ENCODE measurements at regions of chr2 and their contacts with region 1.

Region 1: GRCh38 chr2:200471324-200471848 is 38.5 kb downstream of the KCTD18 start:
- DNase-seq: peak; percentile 49
- H3K4me3 Mint-ChIP-seq: no peak overlapping the region
- H3K27ac Mint-ChIP-seq: no peak overlapping the region
- H3K4me1 Mint-ChIP-seq: peaks cover 36% of the 10 kb centered on the region
- H3K27me3 Mint-ChIP-seq: no peaks in the 10 kb centered on the region

Region 2: GRCh38 chr2:199979832-199980628 is 491.4 kb before region 1 on chr2:
- CTCF ChIA-PET with region 1: interaction called, 34 read pairs
- DNase-seq: peak; percentile 88
- H3K4me3 Mint-ChIP-seq: no peak overlapping the region
- H3K27ac Mint-ChIP-seq: no peak overlapping the region
- H3K4me1 Mint-ChIP-seq: peaks cover 22% of the 10 kb centered on the region
- H3K27me3 Mint-ChIP-seq: peaks cover 3% of the 10 kb centered on the region

Region 3: DNA sequence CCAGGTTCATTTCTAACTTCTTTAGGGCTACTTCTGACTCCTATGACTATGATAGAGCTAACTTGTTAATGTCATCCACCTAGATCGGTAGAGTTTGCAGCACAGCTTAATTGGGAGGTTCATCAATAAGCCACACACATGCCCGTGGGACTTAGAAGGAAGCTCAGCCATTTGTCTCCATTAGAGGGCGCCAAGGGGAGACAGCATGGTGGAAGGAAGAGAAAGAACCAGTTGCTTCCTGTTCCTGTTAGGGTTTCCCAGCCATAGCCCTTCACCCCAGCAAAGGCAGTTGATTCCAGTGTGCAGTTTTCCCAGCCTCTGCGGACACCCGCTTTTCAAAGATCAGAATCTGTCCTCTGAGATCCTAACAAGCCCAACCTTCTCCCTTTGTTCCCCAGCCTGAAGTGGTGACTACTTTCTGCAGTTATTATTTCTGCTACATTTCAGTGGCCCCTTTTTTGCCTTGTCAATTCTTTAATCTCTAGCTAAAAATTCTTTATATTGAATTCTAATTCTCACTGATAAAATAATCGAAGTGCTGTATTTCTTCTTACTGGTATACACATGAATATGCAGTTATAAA is 485.7 kb before region 1 on chr2:
- CTCF ChIA-PET with region 1: interaction called, 34 read pairs
- DNase-seq: peak; percentile 79
- H3K4me3 Mint-ChIP-seq: no peak overlapping the region
- H3K27ac Mint-ChIP-seq: peak overlapping the region; percentile 64
- H3K4me1 Mint-ChIP-seq: peaks cover 6% of the 10 kb centered on the region
- H3K27me3 Mint-ChIP-seq: peaks cover 3% of the 10 kb centered on the region

Measured in activated naive CD4-positive, alpha-beta T cell treated with anti-CD3 and anti-CD28 coated beads, Interleukin-2, amount 10 ng/mL, durations not matched to agents 7 days and 5 days (primary cell).